Spleen (tissue), 13 donors: ENCODE measurements at regions of chr4 and their contacts with region 1.

Region 1: GRCh38 chr4:98928505-98929340 is at the start of gene EIF4E:
- DNase-seq: peak; percentile 98
- H3K4me3 ChIP-seq: peak within 1 kb of the TSS; percentile 89 to 100 (median 96)
- H3K27ac ChIP-seq: peak within 1 kb of the TSS; percentile 85 to 97 (median 96)
- H3K4me1 ChIP-seq: peaks cover 25 to 74% (median 56%) of the 10 kb centered on the region in 6 donors
- H3K27me3 ChIP-seq: no peaks in the 10 kb centered on the region
- CTCF ChIP-seq: peak in 6 of 11 experiments; percentile 10 to 44 (median 24)
- POLR2A ChIP-seq: peak in 1 of 3 donors; percentile 9
- total RNA-seq, gene EIF4E: 59.5 to 86.5 (median 69.4) TPM

Region 2: DNA sequence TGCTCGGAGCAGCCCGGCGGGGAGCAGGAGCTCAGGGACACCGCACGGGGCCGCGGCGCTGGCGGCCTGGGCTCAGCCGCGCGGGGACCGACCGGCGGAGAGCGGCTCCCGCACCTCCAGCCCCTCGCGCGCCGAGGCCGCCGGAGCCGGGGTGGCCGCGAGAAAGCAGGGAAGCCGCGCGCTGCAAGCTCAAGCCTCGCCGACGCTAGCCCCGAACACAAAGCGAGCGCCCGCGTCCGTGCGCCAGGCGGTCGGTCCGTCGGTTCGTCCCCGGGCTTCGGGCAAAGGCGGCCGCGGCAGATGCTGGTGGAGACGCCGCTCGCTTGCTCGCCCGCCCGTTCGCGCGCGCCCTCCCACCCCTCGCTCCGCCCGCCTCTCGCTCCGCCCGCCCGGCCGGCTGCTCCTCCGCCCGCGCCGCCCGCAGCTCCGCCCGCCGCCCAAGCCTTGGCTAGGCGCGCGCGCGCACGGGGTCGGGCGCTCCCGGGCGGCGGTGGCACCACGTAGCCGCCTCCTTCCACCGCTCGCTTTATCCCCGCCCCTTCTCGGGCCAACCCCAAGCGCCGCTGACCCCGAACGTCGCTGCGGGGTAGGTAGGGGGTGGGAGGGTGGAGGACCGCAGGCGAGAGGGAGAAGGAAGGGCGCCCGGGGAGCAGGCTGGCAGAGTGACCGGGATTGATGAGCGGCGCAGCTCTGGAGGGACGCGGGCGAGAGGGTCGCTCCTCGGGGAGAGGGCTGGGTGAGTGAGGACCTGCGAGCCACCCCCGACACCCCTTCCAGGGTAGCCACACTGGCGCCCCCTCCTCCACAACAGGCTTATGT is 270.2 kb before region 1 on chr4 and contains the start of gene TSPAN5:
- intact Hi-C with region 1: loop called (anchors 10 kb)
- DNase-seq: peak; percentile 96
- H3K4me3 ChIP-seq: peak within 1 kb of the TSS; percentile 68 to 87 (median 80)
- H3K27ac ChIP-seq: peak within 1 kb of the TSS; percentile 61 to 89 (median 83)
- H3K4me1 ChIP-seq: peaks cover 12 to 78% (median 44%) of the 10 kb centered on the region in 6 donors
- H3K27me3 ChIP-seq: peaks cover 0 to 26% (median 0%) of the 10 kb centered on the region in 7 donors
- CTCF ChIP-seq: peak in 1 of 11 experiments; percentile 5
- POLR2A ChIP-seq: peak in 2 of 3 donors; percentile 21 to 59
- total RNA-seq, gene TSPAN5: 14.9 to 33.6 (median 25.7) TPM

Region 3: GRCh38 chr4:98995183-98996055 is 66.7 kb after region 1 on chr4 and contains the start of gene METAP1:
- intact Hi-C with region 1: loop called (anchors 10 kb)
- DNase-seq: peak; percentile 100
- H3K4me3 ChIP-seq: peak within 1 kb of the TSS; percentile 87 to 100 (median 96)
- H3K27ac ChIP-seq: peak within 1 kb of the TSS; percentile 85 to 94 (median 90)
- H3K4me1 ChIP-seq: peaks cover 0 to 51% (median 28%) of the 10 kb centered on the region in 6 donors
- H3K27me3 ChIP-seq: no peaks in the 10 kb centered on the region
- CTCF ChIP-seq: peak; percentile 32 to 75 (median 63)
- POLR2A ChIP-seq: peak in 2 of 3 donors; percentile 46 to 51
- total RNA-seq, gene METAP1: 27.9 to 34.7 (median 31.7) TPM

Region 4: GRCh38 chr4:99078931-99079624 is 150.4 kb after region 1 on chr4:
- intact Hi-C with region 1: no loop called
- DNase-seq: no peak
- H3K4me3 ChIP-seq: no peak overlapping the region
- H3K27ac ChIP-seq: no peak overlapping the region
- H3K4me1 ChIP-seq: peaks cover 0 to 13% (median 0%) of the 10 kb centered on the region in 6 donors
- H3K27me3 ChIP-seq: no peaks in the 10 kb centered on the region
- CTCF ChIP-seq: no peak
- POLR2A ChIP-seq: no peak